PC-9 (cell line): ENCODE measurements at regions of chr5 and their contacts with region 1.

Region 1: GRCh38 chr5:119943148-119943547 is 313.8 kb downstream of the FAM170A start:
- DNase-seq: no peak
- H3K4me3 ChIP-seq: no peak overlapping the region
- H3K27ac ChIP-seq: no peak overlapping the region
- H3K4me1 ChIP-seq: no peaks in the 10 kb centered on the region
- H3K27me3 ChIP-seq: no peaks in the 10 kb centered on the region
- CTCF ChIP-seq: peak; percentile 62

Region 2: GRCh38 chr5:120684749-120685415 is 741.7 kb after region 1 on chr5:
- CTCF ChIA-PET with region 1: no interaction called
- POLR2A ChIA-PET with region 1: no interaction called
- intact Hi-C with region 1: loop called (anchors 5 kb)
- DNase-seq: no peak
- H3K4me3 ChIP-seq: no peak overlapping the region
- H3K27ac ChIP-seq: no peak overlapping the region
- H3K4me1 ChIP-seq: 0 out of 2 replicates have a peak, but pooled peaks cover 6% of the 10 kb centered on the region
- H3K27me3 ChIP-seq: no peaks in the 10 kb centered on the region
- CTCF ChIP-seq: no peak

Region 3: DNA sequence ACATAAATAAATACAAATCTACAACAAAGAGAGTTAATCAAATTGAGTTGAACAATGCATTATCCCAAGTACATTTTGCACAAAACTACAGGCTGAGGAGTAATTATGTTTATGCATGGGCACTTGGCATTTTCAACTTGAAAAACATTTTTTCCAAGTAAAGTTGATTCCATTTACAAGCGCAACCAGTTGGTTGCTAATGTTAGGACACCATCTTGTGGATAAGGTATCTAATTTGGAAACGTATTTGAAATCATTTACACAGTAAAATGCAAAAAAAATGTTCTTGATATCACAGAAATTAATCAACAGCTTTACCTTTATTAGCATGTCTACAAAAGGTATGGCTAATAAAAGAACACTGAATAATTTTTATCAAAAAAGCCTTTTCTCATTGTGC is 1927.3 kb after region 1 on chr5:
- CTCF ChIA-PET with region 1: no interaction called
- POLR2A ChIA-PET with region 1: no interaction called
- intact Hi-C with region 1: loop called (anchors 10 kb)
- DNase-seq: peak in 1 of 2 experiments; percentile 35
- H3K4me3 ChIP-seq: no peak overlapping the region
- H3K27ac ChIP-seq: no peak overlapping the region
- H3K4me1 ChIP-seq: 0 out of 2 replicates have a peak, but pooled peaks cover 4% of the 10 kb centered on the region
- H3K27me3 ChIP-seq: no peaks in the 10 kb centered on the region
- CTCF ChIP-seq: peak; percentile 58